Activated CD4-positive, alpha-beta T cell treated with anti-CD3 and anti-CD28 coated beads for 36 hours (primary cell): ENCODE measurements at regions of chr2 and their contacts with region 1.

Region 1: GRCh38 chr2:6835467-6835866 is 30.2 kb downstream of the CMPK2 start:
- DNase-seq: no peak
- ATAC-seq: peak; percentile 92
- H3K4me3 Mint-ChIP-seq: no peak overlapping the region
- H3K27ac Mint-ChIP-seq: no peak overlapping the region
- H3K4me1 Mint-ChIP-seq: peaks cover 18% of the 10 kb centered on the region
- H3K27me3 Mint-ChIP-seq: no peaks in the 10 kb centered on the region

Region 2: GRCh38 chr2:6626401-6627012 is 209.0 kb before region 1 on chr2:
- CTCF ChIA-PET with region 1: no interaction called
- POLR2A ChIA-PET with region 1: no interaction called
- intact Hi-C with region 1: no loop called
- DNase-seq: no peak
- ATAC-seq: no peak
- H3K4me3 Mint-ChIP-seq: no peak overlapping the region
- H3K27ac Mint-ChIP-seq: no peak overlapping the region
- H3K4me1 Mint-ChIP-seq: no peaks in the 10 kb centered on the region
- H3K27me3 Mint-ChIP-seq: peaks cover 3% of the 10 kb centered on the region

Region 3: GRCh38 chr2:6877402-6878304 is 42.2 kb after region 1 on chr2 and contains the start of gene RSAD2:
- CTCF ChIA-PET with region 1: no interaction called
- POLR2A ChIA-PET with region 1: no interaction called
- intact Hi-C with region 1: loop called (anchors 1 kb)
- DNase-seq: peak; percentile 52
- ATAC-seq: peak; percentile 86
- H3K4me3 Mint-ChIP-seq: peak within 1 kb of the TSS; percentile 68
- H3K27ac Mint-ChIP-seq: peak within 1 kb of the TSS; percentile 38
- H3K4me1 Mint-ChIP-seq: peaks cover 77% of the 10 kb centered on the region
- H3K27me3 Mint-ChIP-seq: no peaks in the 10 kb centered on the region
- total RNA-seq, gene RSAD2: 8.1 to 10.2 TPM